Adrenal gland (tissue), 19 donors: ENCODE measurements at regions of chr17 and their contacts with region 1.

Region 1: GRCh38 chr17:52106638-52107261 is 51.8 kb downstream of the CA10 start:
- DNase-seq: peak in 6 of 7 donors; percentile 35 to 81 (median 48)
- H3K4me3 ChIP-seq: no peak overlapping the region
- H3K27ac ChIP-seq: no peak overlapping the region
- H3K4me1 ChIP-seq: no peaks in the 10 kb centered on the region
- H3K27me3 ChIP-seq: no peaks in the 10 kb centered on the region
- CTCF ChIP-seq: peak; percentile 54 to 74 (median 66)
- POLR2A ChIP-seq: no peak

Region 2: DNA sequence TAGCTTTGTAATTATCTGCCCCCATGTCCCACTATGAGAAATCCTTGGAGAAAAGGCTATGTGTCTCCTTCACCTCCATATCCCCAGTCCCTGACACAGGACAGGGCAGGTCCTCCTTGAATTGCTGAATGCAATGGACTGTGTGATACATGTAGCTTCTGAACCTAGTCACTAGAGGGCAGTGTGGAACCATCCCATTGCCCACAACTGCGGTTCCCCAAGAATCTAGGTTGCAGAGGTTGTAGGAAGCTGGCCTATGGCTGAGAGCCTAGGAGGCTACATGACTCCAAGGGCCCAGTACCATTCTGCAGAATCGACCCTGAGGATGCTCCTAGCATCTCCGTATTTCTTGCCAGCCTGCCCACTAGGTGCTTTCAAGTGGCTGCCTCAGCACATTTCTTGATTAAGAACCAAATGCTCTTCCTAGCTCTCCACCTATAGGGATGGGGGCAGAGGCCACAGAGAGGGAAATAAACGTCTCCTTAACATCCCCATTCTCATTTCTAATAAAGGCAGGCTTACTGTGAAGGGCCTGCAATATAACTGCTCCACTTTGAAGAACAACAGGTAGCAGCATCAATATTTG is 342.3 kb before region 1 on chr17:
- intact Hi-C with region 1: loop called in 1 of 2 experiments (anchors 5 kb)
- DNase-seq: peak; percentile 35 to 72 (median 47)
- H3K4me3 ChIP-seq: no peak overlapping the region
- H3K27ac ChIP-seq: no peak overlapping the region
- H3K4me1 ChIP-seq: no peaks in the 10 kb centered on the region
- H3K27me3 ChIP-seq: no peaks in the 10 kb centered on the region
- CTCF ChIP-seq: peak; percentile 55 to 81 (median 63)
- POLR2A ChIP-seq: no peak